Stomach (tissue), 19 donors: ENCODE measurements at regions of chr6 and their contacts with region 1.

Region 1: GRCh38 chr6:146543211-146543939 is at the start of gene RAB32:
- DNase-seq: peak; percentile 94 to 97
- H3K4me3 ChIP-seq: peak within 1 kb of the TSS; percentile 57 to 82 (median 66)
- H3K27ac ChIP-seq: peak within 1 kb of the TSS; percentile 95 to 99 (median 97)
- H3K4me1 ChIP-seq: peaks cover 12 to 43% (median 24%) of the 10 kb centered on the region in 4 donors
- H3K27me3 ChIP-seq: no peaks in the 10 kb centered on the region
- CTCF ChIP-seq: peak in 5 of 7 experiments; percentile 20 to 85 (median 64)
- EP300 ChIP-seq: no peak
- POLR2A ChIP-seq: no peak
- total RNA-seq, gene RAB32: 3.5 to 21.7 (median 4.6) TPM

Region 2: GRCh38 chr6:145963216-145964068 is 579.9 kb before region 1 on chr6:
- intact Hi-C with region 1: loop called (anchors 10 kb)
- DNase-seq: peak; percentile 46 to 81
- H3K4me3 ChIP-seq: peak overlapping the region; percentile 59 to 89 (median 81)
- H3K27ac ChIP-seq: peak overlapping the region; percentile 90 to 94 (median 92)
- H3K4me1 ChIP-seq: peaks cover 18 to 55% (median 46%) of the 10 kb centered on the region in 4 donors
- H3K27me3 ChIP-seq: no peaks in the 10 kb centered on the region
- CTCF ChIP-seq: no peak
- EP300 ChIP-seq: no peak
- POLR2A ChIP-seq: no peak

Region 3: DNA sequence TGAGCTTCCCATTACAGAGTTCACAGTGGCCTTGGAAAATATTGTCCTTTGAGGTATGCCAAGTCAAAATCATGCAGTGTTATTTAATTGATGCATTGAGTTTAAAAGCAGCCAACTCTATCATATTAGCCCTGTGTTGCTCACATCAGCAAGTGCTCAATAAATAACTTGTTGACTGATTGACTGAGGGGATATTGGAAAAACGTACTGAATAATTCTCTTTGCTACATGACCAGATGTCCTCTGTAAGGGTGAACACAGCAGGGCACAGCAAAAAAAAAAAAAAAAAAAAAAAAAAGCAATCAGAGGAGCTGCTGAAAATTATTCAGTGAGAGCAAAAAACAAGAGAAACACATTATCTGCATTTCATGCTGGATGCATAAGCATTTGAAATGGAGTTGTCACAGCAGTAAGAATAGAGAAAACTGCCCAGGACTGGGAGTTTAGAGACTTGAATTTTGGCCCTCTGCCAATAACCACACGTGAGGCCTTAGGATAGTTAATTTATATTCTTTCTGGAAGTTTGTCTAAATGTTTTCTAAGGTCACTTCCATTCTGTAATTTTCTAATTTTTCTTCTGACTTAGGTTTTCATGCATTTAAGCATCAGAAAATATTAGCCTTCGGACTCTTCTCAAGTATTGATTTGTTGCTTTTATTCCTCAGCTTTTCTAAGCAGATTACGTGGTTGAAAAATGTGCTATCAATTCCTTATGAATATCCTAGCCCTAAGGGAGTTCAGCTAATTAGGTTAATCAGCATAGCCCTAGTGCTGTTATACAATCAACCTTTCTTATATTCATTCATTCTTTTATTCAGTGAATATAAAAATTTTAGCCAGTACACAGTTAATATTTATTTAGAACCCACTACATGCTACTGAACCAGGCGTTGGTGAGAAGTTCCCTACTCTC is 414.1 kb after region 1 on chr6:
- intact Hi-C with region 1: no loop called
- DNase-seq: no peak
- H3K4me3 ChIP-seq: no peak overlapping the region
- H3K27ac ChIP-seq: no peak overlapping the region
- H3K4me1 ChIP-seq: no peaks in the 10 kb centered on the region
- H3K27me3 ChIP-seq: no peaks in the 10 kb centered on the region
- CTCF ChIP-seq: no peak
- EP300 ChIP-seq: no peak
- POLR2A ChIP-seq: no peak

Region 4: DNA sequence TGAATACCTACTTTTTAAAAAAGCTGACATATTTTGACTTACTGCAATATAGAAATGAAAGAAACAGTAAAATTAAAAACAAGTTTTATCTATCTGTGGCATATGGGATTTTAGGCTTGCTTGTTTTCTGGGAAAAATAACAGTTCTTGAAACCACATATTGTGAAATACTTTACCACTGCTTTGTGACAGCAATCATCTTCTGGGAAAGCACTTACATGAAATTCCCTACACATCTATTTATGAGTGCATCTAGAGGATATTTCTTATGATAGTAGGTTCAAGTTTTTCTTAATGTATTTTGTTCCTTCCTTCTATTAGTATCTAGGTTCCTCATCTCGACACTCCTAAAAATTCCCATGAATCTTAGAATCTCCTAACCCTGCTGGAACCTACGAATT is 736.1 kb after region 1 on chr6:
- intact Hi-C with region 1: no loop called
- DNase-seq: no peak
- H3K4me3 ChIP-seq: no peak overlapping the region
- H3K27ac ChIP-seq: no peak overlapping the region
- H3K4me1 ChIP-seq: peaks cover 0 to 25% (median 15%) of the 10 kb centered on the region in 4 donors
- H3K27me3 ChIP-seq: no peaks in the 10 kb centered on the region
- CTCF ChIP-seq: no peak
- EP300 ChIP-seq: no peak
- POLR2A ChIP-seq: no peak